ENCODE measurements at regions of chr1 and their contacts with region 1.

Region 1: DNA sequence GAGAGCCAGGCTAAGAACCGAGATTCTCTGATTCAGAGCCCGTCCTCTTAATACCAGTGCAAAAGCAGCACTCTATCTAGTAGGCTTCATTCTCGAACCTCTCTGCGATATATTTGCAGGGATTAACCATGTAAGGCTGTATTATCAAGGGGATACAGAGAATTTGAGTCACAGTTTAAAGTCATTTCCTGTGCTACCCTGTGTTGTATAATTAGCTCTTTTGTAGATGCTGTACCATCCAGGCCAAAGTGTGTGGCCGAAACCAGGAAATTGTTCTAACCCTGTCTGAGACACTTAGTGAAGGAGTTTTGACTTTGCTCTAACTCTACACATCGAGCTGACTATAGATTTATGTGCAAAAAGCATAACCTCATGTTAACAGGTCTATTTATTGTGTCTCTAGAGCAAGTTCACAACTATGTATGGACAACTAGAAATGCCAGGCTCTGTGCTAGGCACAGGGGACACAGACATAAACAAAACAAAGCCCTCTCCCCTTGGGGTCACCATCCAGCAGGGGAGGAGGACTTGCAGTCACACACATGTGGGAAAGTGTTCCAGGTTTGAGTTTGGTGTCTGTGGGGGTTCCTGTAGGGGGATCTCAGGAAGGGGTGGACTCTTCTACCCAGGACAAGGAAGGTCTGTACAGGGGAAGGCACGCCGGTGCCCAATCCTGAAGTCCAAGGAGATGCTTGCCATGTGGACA is 182.2 kb downstream of the DHRS3 start:
- DNase-seq: no peak

Region 2: DNA sequence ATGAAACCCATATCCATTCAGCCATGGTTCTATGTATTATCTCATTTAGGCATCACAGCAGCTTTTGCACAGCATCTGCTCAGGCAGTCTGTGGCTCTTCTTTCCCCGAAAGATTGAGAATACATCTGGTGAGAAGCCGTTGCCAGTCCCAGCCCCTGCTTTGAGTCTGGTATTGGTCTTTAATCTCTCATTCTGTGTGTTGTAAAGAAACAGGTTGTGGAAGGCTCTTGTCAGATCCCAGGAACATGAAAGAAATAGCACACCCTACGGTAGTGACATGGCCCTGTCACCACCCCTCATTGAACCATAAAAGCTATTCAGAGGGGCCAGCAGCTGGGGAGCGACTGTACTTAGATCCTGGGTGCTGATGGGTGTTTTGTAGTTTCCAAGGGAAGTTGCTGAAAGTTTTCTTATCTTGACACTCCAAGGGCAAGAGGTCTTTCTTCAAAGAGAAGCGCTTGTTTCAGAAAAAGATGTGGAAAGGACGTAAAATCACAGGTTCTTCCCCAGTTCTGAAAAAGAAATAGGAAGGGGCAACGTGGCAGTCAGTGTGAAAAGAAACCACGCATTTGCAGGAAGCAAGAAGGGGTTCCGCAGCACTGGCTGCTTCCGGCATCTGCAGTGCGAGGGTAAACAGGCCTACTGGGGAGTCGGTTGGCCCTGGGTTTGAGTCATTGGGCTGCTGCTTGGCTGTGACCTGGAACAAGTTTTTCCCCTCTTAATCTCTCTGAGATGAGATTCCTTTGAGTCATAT is 37.2 kb after region 1 on chr1:
- intact Hi-C with region 1: loop called (anchors 5 kb)
- DNase-seq: no peak